H1 (cell line): ENCODE measurements at regions of chr4 and their contacts with region 1.

Region 1: GRCh38 chr4:77146186-77147078 is 10.6 kb upstream of the CCNG2 start:
- DNase-seq: no peak
- H3K4me3 ChIP-seq: no peak overlapping the region
- H3K27ac ChIP-seq: no peak overlapping the region
- H3K4me1 ChIP-seq: no peaks in the 10 kb centered on the region
- H3K27me3 ChIP-seq: no peaks in the 10 kb centered on the region
- CTCF ChIP-seq: no peak
- EP300 ChIP-seq: no peak
- POLR2A ChIP-seq: no peak
- RAD21 ChIP-seq: no peak

Region 2: DNA sequence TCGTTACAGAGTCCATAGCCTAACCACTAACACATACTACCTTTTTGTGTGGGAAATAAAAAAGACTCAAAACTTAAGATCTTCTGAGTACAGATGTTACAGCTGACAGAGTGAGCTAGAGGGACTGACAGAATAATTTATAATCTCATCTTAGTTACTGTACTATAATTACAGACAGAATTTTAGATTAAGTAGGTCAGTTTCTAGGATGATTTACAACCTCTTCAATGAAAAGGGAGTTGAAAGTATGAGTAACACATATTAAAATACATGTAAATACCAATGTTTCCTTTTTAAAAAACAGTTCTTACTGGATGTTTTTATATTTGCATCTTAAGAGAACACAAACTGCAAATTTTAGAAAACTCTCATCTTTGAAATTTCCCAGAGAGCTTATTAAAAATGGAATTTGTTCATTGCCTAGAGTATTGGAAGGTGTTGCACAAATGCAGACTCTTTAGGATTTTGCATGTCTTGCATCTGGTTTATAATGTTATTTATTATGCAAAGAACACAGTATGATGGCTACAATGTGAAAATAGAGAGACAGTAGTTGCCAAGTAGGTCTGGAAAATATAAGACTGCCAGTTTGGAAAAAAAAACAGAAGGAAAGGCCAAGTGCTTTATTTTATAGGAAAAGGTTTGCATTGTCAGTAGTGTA is 13.7 kb before region 1 on chr4:
- CTCF ChIA-PET with region 1: interaction called, 12 read pairs
- POLR2A ChIA-PET with region 1: interaction called, 4 read pairs
- DNase-seq: no peak
- H3K4me3 ChIP-seq: no peak overlapping the region
- H3K27ac ChIP-seq: no peak overlapping the region
- H3K4me1 ChIP-seq: peaks cover 0 to 5% (median 0%) of the 10 kb centered on the region in 4 experiments; a peak in 2 of 7 replicates
- H3K27me3 ChIP-seq: no peaks in the 10 kb centered on the region
- CTCF ChIP-seq: no peak
- EP300 ChIP-seq: no peak
- POLR2A ChIP-seq: no peak
- RAD21 ChIP-seq: no peak